IMR-90 (cell line): ENCODE measurements at regions of chr3 and their contacts with region 1.

Region 1: DNA sequence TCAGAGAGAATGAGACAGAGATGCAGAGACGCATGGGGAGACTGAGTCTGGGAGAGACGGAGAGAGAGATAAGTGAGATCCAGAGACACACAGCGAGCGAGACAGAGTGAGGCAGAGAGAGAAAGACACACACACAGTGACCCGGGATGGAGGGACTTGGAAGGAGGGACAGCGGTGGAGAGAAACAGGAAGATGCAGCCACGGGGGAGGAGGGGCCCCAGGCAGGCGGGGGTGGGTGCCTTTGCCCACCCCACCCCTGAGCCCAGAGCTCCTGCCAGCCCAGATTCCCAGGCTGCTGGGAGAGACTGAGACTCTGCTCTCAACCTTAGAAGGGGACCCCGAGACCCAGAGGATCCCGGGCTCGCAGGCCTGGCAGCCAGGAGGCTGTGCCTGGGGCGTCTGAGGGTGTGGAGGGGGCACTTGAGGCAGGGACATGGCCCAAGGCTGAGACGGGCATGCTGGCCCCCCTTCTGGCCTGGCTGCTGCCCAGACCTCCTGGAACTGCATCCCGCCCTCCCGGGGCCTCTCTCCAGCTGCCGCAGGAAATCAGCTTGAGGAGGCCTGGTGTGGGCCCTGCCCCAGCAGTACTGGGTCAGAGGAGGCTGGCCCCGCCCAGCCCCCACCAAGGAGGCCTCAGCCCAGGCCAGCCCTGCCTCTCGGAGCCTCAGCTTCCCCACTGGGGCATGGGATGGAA is 18.1 kb downstream of the H1-8 start:
- DNase-seq: peak; percentile 76
- ATAC-seq: peak; percentile 80
- H3K4me3 ChIP-seq: peak overlapping the region; percentile 24; the same call in 1 of the 2 replicates
- H3K27ac ChIP-seq: peak overlapping the region; percentile 98
- H3K4me1 ChIP-seq: peaks cover 37% of the 10 kb centered on the region
- H3K27me3 ChIP-seq: no peaks in the 10 kb centered on the region
- CTCF ChIP-seq: no peak
- POLR2A ChIP-seq: no peak
- RAD21 ChIP-seq: 0 out of 2 replicates have a peak, but pooled peaks have one; percentile 9

Region 2: GRCh38 chr3:129596194-129597086 is 35.4 kb after region 1 on chr3:
- CTCF ChIA-PET with region 1: no interaction called
- POLR2A ChIA-PET with region 1: no interaction called
- dilution Hi-C with region 1: no loop called
- in situ Hi-C with region 1: no loop called
- intact Hi-C with region 1: loop called (anchors 2 kb)
- DNase-seq: peak; percentile 96
- ATAC-seq: peak; percentile 83
- H3K4me3 ChIP-seq: no peak overlapping the region
- H3K27ac ChIP-seq: peak overlapping the region; percentile 87
- H3K4me1 ChIP-seq: peaks cover 55% of the 10 kb centered on the region
- H3K27me3 ChIP-seq: no peaks in the 10 kb centered on the region
- CTCF ChIP-seq: no peak
- POLR2A ChIP-seq: no peak
- RAD21 ChIP-seq: peak; percentile 39